ENCODE measurements at regions of chr4 and their contacts with region 1.

Region 1: GRCh38 chr4:15882675-15883086 is 55.9 kb downstream of the FGFBP1 start:
- DNase-seq: no peak
- ATAC-seq: peak; percentile 89

Region 2: GRCh38 chr4:15805583-15806517 is 76.8 kb before region 1 on chr4:
- intact Hi-C with region 1: loop called (anchors 5 kb)
- DNase-seq: no peak
- ATAC-seq: peak; percentile 82

Region 3: GRCh38 chr4:15848191-15848842 is 34.4 kb before region 1 on chr4:
- intact Hi-C with region 1: no loop called
- DNase-seq: no peak
- ATAC-seq: no peak

Region 4: DNA sequence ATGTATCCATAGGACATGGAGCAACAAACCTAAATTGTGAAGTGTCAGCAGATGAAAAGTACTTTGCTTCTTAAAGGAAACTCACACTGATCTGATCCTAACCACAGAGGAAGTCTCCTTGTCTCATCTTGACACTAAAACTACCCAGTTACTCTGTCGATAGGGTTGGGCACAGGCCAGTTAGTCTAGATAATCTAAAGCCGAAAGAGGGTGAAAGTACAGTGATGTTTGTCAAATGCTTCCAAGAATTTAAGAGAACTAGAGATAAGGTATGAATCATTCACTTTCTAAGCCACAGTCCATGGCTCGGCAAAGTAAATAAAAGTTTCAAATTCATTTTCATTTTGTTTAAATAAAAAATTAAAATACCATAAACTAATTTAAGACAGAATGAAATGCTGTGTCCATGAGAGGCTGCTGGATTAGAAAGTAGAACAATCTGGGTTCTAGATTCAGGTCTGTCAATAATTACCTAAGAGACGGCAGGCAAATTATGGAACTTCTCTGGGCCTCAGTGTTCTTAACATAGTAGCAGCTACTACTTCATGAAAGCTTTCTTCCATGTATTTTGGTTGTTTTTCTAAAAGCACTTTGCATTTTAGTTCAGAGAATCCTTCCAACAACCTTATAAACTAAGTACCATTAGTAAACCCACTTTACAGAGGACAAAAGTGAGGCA is 839.1 kb after region 1 on chr4:
- intact Hi-C with region 1: no loop called
- DNase-seq: no peak
- ATAC-seq: peak; percentile 62